ENCODE measurements at regions of chr2 and their contacts with region 1.

Region 1: DNA sequence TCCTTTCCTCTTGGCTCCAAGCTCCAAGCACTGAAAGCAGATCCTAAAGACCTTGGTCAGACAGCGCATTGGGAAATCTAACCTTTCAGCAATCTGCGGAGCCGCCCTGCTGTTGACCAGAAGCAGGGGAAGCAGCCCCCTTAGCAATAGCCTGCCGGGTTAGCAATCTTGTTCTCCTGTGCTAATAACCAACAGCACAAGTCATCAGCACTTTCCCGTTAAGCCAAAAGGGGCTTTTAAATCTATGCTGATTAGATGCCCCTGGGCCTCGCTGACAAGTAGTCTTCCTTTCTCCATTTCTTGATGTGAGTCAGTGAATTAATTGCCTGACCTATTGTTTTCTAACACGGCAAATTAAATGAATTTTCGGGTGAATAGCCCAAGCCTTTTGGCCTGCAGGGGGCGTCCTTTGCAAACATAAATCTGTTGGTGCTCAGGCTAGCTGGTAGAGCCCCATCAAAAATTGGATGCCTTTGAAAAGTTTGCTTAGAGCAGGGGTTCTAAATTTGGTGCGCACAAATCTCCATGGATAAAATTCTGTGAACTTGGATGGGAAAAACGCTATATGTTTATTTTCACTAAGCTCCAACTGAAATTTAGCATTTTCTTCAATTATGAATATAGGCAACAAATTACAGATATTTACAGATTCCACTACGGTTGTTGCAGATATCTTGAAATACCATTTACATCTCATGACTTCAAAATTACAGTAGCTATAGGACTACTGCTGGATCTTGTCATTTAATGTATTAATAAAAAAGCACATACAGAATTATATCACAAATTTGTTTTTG is 24.6 kb downstream of the MAIP1 start:
- DNase-seq: peak; percentile 91
- H3K4me3 ChIP-seq: peak overlapping the region in 2 of 3 experiments; percentile 8 to 9
- H3K27ac ChIP-seq: no peak overlapping the region
- H3K4me1 ChIP-seq: peaks cover 9% of the 10 kb centered on the region
- H3K27me3 ChIP-seq: no peaks in the 10 kb centered on the region
- CTCF ChIP-seq: peak; percentile 66 to 92
- POLR2A ChIP-seq: no peak

Region 2: DNA sequence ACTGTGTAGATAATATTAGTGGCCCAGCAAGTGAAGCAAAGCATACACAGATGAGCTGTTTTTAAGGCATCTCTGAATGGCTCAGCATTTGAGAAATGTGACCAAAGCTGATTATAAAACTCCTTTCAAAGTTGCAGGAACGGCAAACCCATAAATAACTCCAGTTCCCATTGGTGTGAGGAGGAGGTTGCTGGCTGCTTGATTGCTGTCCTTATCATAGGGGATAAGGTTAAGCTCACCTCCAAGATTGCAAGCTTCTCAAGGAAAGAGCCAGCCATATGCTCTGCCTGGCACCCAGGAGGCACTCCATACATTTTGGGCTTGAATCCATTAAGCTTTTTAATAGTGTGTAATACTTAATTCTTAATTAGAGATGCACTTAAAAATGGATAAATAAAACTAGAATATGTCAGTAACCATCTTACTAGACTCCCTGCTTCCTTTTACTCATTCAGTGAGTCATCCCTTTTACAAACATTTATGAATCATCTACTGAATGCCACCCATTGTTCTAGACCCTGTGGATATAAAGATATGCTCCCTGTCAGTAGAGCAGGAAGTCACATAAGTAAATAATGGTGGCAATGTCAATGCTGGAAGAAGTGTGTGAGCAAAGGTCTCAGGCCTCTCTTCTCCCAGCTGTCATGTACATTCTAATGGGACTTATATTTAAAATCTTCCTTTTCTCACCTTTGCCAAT is 425.7 kb after region 1 on chr2:
- CTCF ChIA-PET with region 1: interaction called, 10 read pairs
- POLR2A ChIA-PET with region 1: no interaction called
- dilution Hi-C with region 1: no loop called
- intact Hi-C with region 1: no loop called
- DNase-seq: peak; percentile 94
- H3K4me3 ChIP-seq: peak overlapping the region in 1 of 3 experiments; percentile 61
- H3K27ac ChIP-seq: peak overlapping the region; percentile 99
- H3K4me1 ChIP-seq: peaks cover 47% of the 10 kb centered on the region
- H3K27me3 ChIP-seq: no peaks in the 10 kb centered on the region
- CTCF ChIP-seq: no peak
- POLR2A ChIP-seq: peak; percentile 31

Region 3: GRCh38 chr2:200509612-200510433 is 529.8 kb after region 1 on chr2 and contains the start of gene KCTD18:
- CTCF ChIA-PET with region 1: interaction called, 9 read pairs
- POLR2A ChIA-PET with region 1: no interaction called
- dilution Hi-C with region 1: no loop called
- intact Hi-C with region 1: loop called (anchors 1 kb)
- DNase-seq: peak; percentile 86
- H3K4me3 ChIP-seq: peak within 1 kb of the TSS; percentile 45 to 64 (median 62)
- H3K27ac ChIP-seq: peak within 1 kb of the TSS; percentile 23
- H3K4me1 ChIP-seq: peaks cover 7% of the 10 kb centered on the region
- H3K27me3 ChIP-seq: peaks cover 21 to 36% of the 10 kb centered on the region in 2 experiments
- CTCF ChIP-seq: peak; percentile 88 to 91
- POLR2A ChIP-seq: peak; percentile 73
- total RNA-seq, gene KCTD18: 5.4 and 6.6 TPM in 2 replicates

Region 4: DNA sequence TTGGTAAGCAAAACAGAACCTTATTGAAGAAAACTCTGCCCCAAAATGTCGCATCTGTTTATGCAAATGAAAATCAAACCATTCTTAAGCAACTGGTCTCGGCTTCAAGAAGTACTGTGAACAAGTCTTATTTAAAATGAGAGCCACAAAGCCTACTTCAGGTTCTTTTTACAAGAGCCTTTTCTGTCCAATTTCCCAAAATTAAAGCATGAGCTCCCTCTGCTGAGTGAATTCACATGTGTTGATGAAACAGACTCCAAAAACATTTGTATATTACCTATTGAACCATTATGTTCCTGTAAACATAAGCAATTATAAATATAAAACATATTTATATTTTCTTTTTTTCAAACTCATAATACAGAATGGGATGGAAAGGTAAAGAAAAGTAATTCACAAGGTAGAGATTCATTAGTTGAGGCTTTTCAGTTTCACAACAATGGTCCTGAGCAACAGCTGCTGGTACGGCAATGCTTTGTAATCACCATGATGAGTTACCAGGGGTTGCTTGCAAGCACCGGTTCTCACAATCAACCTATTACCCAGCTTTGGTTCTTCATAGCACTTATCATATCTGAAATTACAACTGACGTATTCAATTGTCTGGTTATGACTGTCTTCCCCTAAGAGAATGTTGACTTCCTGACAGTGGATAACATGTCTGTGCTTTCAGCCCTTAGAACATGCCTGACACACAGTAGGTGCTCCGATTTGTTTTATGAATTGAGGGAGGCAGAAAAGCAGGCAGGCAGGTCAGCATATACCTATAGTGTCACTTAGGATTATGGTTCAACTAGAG is 723.3 kb after region 1 on chr2:
- CTCF ChIA-PET with region 1: interaction called, 97 read pairs
- POLR2A ChIA-PET with region 1: no interaction called
- dilution Hi-C with region 1: no loop called
- intact Hi-C with region 1: loop called (anchors 1 kb)
- DNase-seq: peak; percentile 58
- H3K4me3 ChIP-seq: no peak overlapping the region
- H3K27ac ChIP-seq: no peak overlapping the region
- H3K4me1 ChIP-seq: no peaks in the 10 kb centered on the region
- H3K27me3 ChIP-seq: peaks cover 16 to 22% of the 10 kb centered on the region in 2 experiments
- CTCF ChIP-seq: peak; percentile 17 to 21
- POLR2A ChIP-seq: no peak